ENCODE measurements at regions of chr16 and their contacts with region 1.

Region 1: DNA sequence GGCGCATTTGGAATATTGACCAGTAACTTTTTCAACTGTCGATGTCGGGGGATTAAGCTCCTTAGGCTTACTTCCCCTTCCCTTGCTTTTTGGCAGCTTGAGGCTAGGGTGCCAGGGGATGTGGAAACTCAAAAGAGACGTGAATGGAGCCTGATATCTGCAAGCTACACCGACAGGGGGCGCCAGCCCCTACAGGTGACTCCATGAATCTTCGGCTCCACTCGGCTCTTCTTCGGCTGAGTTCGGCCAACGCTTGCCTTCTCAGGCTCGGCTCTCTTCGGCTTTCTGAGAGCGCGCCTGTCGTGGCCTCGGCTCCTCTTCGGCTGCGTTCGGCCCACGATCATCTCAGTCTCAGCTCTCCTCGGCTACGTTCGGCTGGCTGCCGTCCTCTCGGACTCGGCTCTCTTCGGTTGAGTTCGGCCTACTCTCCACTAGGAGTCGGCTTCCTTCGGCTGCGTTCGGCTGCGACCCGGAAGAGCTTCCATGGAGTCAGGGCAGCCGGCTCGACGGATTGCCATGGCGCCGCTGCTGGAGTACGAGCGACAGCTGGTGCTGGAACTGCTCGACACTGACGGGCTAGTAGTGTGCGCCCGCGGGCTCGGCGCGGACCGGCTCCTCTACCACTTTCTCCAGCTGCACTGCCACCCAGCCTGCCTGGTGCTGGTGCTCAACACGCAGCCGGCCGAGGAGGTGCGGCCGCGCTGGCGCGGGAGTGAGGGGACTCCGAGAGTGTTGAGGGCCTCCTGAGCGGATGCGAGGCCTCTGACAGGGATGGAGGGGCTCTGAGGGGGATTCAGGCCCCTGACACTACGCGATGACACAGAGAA is at the start of gene ERCC4:
- DNase-seq: peak; percentile 99 to 100 (median 100)
- H3K4me3 ChIP-seq: peak within 1 kb of the TSS; percentile 88
- H3K27ac ChIP-seq: peak within 1 kb of the TSS in 1 of 2 donors; percentile 43
- H3K4me1 ChIP-seq: peaks cover 7% of the 10 kb centered on the region
- H3K27me3 ChIP-seq: no peaks in the 10 kb centered on the region
- CTCF ChIP-seq: peak; percentile 87 to 99 (median 91)
- EP300 ChIP-seq: no peak
- POLR2A ChIP-seq: peak; percentile 19
- total RNA-seq, gene ERCC4: 7.4 to 21.4 (median 17.7) TPM

Region 2: GRCh38 chr16:13866073-13866472 is 53.8 kb before region 1 on chr16:
- intact Hi-C with region 1: loop called in 2 of 4 experiments (anchors 2 to 5 kb)
- DNase-seq: peak; percentile 73 to 84 (median 81)
- H3K4me3 ChIP-seq: no peak overlapping the region
- H3K27ac ChIP-seq: no peak overlapping the region
- H3K4me1 ChIP-seq: no peaks in the 10 kb centered on the region
- H3K27me3 ChIP-seq: no peaks in the 10 kb centered on the region
- CTCF ChIP-seq: peak; percentile 33 to 57 (median 50)
- EP300 ChIP-seq: no peak
- POLR2A ChIP-seq: no peak

Region 3: DNA sequence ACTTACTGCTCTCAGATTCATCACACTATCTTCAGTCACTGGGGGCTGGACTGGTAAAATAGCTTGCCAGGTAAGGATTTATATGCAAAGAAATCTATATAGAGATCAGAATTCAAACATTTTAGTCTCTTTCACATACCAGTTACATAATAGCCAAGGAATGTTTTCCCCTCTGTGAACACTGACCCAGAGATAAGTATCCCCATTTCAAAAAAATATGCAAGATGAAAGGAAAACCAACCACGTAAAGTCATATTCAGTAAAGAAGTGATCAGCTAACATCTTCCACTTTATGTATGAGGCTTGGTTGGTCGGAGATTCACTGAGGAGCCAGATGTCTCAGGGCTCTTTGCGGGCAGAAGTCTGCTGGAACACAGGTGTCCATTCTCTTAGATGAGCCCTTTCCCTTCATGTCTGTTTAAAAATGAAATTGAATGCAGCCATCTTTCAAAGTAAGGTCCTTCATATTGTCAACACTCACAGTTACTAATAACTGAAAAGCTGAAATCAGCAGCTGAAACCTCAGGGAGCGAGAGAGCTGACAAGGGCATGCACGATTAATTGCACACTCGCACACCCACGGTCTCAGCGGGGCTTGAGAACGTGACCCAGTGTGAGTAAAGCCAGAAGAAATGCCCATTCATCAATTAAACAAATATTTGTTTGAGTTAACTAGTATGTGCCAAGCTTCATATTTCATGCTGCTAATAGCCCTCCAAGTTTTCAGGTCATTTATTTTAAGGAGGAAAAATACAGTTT is 312.4 kb after region 1 on chr16:
- intact Hi-C with region 1: loop called in 1 of 4 experiments (anchors 10 kb)
- DNase-seq: no peak
- H3K4me3 ChIP-seq: no peak overlapping the region
- H3K27ac ChIP-seq: no peak overlapping the region
- H3K4me1 ChIP-seq: no peaks in the 10 kb centered on the region
- H3K27me3 ChIP-seq: no peaks in the 10 kb centered on the region
- CTCF ChIP-seq: no peak
- EP300 ChIP-seq: no peak
- POLR2A ChIP-seq: no peak

Region 4: DNA sequence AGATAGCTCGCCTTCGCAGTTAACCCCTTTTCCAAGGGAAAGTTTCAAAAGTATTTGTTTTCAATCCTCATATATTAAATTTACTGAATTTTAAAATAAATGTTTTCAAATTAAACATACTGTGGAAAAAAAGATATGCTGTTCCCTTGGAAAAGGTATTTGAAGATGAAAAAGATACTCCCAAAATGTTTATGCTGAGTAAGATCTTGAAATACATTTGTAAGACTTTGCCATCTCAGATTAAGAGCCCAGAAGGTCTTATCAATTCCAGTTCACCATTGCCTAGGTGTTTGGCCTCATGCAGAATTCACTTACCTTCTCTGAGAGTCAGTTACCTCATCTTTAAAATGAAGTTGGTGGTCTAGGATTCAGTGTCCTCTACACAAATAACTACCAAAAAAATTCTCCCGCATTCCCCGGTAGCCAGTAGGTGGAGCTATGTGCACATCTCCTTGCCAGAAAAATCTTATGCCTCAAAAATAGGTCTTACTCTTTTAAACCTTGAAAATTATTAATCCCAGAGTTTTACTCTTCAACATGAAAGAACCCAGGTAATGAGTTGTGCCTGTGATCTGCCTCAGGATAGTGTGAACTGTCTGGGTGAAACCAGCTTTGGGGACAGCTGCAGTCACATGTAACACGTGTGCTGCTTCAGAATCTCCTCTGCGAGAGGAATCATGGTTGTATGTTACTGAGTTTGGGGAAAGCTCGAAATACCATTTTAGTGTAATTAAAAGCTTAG is 329.6 kb after region 1 on chr16:
- intact Hi-C with region 1: loop called in 1 of 4 experiments (anchors 10 kb)
- DNase-seq: peak; percentile 25 to 65 (median 35)
- H3K4me3 ChIP-seq: no peak overlapping the region
- H3K27ac ChIP-seq: no peak overlapping the region
- H3K4me1 ChIP-seq: no peaks in the 10 kb centered on the region
- H3K27me3 ChIP-seq: no peaks in the 10 kb centered on the region
- CTCF ChIP-seq: peak; percentile 50 to 62 (median 56)
- EP300 ChIP-seq: no peak
- POLR2A ChIP-seq: no peak

Region 5: DNA sequence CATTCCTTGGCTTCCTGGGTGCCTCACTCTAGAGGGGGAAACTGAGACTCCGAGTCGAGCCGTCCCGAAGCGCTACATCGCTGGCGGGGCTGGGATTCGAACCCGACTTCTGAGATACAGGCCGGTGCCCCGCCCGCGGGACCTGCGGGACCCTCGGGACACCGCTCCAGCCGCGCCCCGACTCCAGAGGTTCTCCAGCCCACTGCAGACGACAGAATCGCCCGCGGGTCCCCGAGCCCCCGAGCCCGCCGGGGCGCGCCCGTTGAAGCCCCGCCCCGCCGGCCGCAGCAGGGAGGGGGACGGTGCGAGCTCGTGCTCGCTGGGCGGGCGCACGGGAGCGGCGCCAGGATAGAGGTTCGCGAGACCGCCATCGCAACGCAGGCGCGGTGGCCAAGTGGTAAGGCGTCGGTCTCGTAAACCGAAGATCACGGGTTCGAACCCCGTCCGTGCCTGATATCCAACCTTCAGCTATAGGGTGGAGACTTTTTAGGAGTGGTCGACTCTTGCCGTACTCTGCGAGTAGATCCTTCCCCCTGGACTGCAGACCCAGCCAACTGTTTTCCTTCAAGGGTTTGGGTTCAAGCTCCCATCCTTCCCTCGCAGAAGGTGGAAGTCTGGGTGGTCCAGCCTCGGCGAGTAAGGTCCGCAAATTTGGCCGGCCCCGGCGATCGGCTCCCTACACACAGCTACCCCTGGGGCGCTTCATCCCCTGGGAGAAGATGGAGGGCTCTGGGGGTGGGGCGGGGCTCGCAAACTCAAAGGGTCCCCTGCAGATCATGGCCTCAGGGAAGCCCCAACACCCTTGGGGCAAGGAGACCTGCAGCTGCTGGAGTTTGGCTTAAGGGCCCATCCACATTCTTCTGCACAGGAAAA is 365.9 kb after region 1 on chr16:
- intact Hi-C with region 1: loop called in 1 of 4 experiments (anchors 10 kb)
- DNase-seq: peak; percentile 89 to 98 (median 94)
- H3K4me3 ChIP-seq: peak overlapping the region; percentile 64
- H3K27ac ChIP-seq: peak overlapping the region; percentile 75 to 90
- H3K4me1 ChIP-seq: peaks cover 4% of the 10 kb centered on the region
- H3K27me3 ChIP-seq: no peaks in the 10 kb centered on the region
- CTCF ChIP-seq: peak in 1 of 3 donors; percentile 7
- EP300 ChIP-seq: no peak
- POLR2A ChIP-seq: peak; percentile 25

Region 6: DNA sequence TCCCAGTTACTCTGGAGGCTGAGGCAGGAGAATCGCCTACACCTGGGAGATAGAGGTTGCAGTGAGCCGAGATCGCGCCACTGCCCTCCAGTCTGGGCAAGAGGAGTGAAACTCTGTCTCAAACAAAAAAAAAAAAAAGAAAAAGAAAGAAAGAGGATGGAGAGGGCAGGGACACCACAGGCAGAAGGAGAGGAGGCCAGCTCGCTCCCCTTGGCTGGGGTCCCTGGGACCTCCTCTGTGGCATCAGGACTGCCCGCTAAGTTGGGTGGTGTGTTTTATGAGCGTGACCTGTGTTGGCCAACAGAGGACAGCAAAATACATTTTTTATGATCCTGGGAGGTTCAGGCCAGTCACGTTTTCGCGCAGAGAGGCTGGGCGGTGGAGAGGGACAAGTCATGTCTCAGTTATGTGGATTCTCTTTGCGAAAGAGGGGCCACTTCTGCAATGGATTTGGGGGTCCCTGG is 380.8 kb after region 1 on chr16:
- intact Hi-C with region 1: loop called in 1 of 4 experiments (anchors 5 kb)
- DNase-seq: peak; percentile 73 to 85 (median 77)
- H3K4me3 ChIP-seq: peak overlapping the region; percentile 75
- H3K27ac ChIP-seq: peak overlapping the region in 1 of 2 donors; percentile 1
- H3K4me1 ChIP-seq: peaks cover 3% of the 10 kb centered on the region
- H3K27me3 ChIP-seq: no peaks in the 10 kb centered on the region
- CTCF ChIP-seq: peak; percentile 31 to 69 (median 68)
- EP300 ChIP-seq: no peak
- POLR2A ChIP-seq: no peak

Region 7: DNA sequence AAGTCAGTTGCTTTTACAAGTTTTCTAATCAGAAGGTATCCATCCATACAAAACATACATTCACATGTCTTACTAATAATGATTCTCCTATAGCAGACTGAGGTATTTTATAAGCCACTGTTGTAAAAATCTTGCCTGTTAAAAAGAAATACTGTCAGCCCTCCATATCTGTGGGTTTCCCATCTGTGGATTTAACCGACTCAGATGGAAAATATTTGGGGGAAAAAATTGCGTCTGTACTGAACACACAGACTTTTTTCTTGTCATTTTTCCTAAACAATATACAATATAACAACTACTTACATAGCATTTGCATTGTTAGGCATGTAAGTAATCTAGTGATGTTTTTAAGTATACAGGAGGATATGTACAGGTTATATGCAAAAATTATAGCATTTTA is 619.7 kb after region 1 on chr16:
- intact Hi-C with region 1: loop called in 2 of 4 experiments (anchors 10 kb)
- DNase-seq: no peak
- H3K4me3 ChIP-seq: no peak overlapping the region
- H3K27ac ChIP-seq: no peak overlapping the region
- H3K4me1 ChIP-seq: no peaks in the 10 kb centered on the region
- H3K27me3 ChIP-seq: no peaks in the 10 kb centered on the region
- CTCF ChIP-seq: no peak
- EP300 ChIP-seq: no peak
- POLR2A ChIP-seq: no peak